PC-3 (cell line): ENCODE measurements at regions of chr6 and their contacts with region 1.

Region 1: DNA sequence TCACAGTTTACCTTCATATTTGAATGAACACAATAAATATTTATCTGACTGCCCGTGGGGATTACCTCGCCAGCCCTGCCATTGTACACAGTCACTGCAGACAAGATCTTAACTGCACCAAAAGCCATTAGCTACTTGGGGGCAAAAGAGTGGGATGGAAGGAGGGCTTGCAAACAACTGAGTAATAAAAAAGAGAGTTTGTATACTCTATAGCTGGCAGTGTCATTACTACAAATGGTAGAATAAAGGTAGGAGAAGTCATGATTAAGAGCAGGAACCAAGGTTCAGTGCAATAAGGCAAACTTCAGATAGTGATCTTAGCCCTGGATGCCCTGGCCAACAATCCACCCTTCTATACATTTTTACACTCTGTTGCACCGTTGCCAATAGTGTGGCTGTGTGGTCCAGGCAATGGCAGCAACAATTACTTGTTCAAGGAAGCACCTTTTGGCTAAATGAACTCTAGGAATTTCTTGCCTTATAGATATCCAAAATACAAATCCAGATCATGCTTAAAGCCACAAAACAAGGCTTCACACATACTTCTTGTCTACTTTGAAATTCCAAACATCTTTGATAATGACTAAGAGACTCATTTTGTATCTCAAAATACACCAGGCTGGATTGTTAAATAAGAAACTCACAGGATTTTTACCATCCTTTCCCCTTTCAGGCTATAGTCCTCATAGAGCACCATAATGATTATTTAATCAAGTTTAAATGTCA is 955.3 kb upstream of the ADGRB3 start:
- DNase-seq: peak; percentile 65
- ATAC-seq: peak; percentile 61
- H3K4me3 ChIP-seq: no peak overlapping the region
- H3K27ac ChIP-seq: peak overlapping the region; percentile 65
- H3K4me1 ChIP-seq: peaks cover 43% of the 10 kb centered on the region
- H3K27me3 ChIP-seq: no peaks in the 10 kb centered on the region
- CTCF ChIP-seq: no peak

Region 2: GRCh38 chr6:66048684-66049474 is 1630.9 kb before region 1 on chr6:
- CTCF ChIA-PET with region 1: no interaction called
- POLR2A ChIA-PET with region 1: no interaction called
- intact Hi-C with region 1: no loop called
- DNase-seq: no peak
- ATAC-seq: no peak
- H3K4me3 ChIP-seq: no peak overlapping the region
- H3K27ac ChIP-seq: no peak overlapping the region
- H3K4me1 ChIP-seq: no peaks in the 10 kb centered on the region
- H3K27me3 ChIP-seq: no peaks in the 10 kb centered on the region
- CTCF ChIP-seq: no peak

Region 3: GRCh38 chr6:67541586-67541985 is 138.1 kb before region 1 on chr6:
- CTCF ChIA-PET with region 1: no interaction called
- POLR2A ChIA-PET with region 1: no interaction called
- intact Hi-C with region 1: loop called (anchors 5 kb)
- DNase-seq: peak; percentile 34
- ATAC-seq: peak; percentile 85
- H3K4me3 ChIP-seq: no peak overlapping the region
- H3K27ac ChIP-seq: no peak overlapping the region
- H3K4me1 ChIP-seq: no peaks in the 10 kb centered on the region
- H3K27me3 ChIP-seq: no peaks in the 10 kb centered on the region
- CTCF ChIP-seq: no peak

Region 4: GRCh38 chr6:67630146-67630545 is 49.6 kb before region 1 on chr6:
- CTCF ChIA-PET with region 1: no interaction called
- POLR2A ChIA-PET with region 1: no interaction called
- intact Hi-C with region 1: loop called (anchors 2 kb)
- DNase-seq: peak; percentile 64
- ATAC-seq: peak; percentile 99
- H3K4me3 ChIP-seq: no peak overlapping the region
- H3K27ac ChIP-seq: 0 out of 2 replicates have a peak overlapping the region, but pooled peaks have one; percentile 7
- H3K4me1 ChIP-seq: peaks cover 13% of the 10 kb centered on the region
- H3K27me3 ChIP-seq: no peaks in the 10 kb centered on the region
- CTCF ChIP-seq: no peak

Region 5: DNA sequence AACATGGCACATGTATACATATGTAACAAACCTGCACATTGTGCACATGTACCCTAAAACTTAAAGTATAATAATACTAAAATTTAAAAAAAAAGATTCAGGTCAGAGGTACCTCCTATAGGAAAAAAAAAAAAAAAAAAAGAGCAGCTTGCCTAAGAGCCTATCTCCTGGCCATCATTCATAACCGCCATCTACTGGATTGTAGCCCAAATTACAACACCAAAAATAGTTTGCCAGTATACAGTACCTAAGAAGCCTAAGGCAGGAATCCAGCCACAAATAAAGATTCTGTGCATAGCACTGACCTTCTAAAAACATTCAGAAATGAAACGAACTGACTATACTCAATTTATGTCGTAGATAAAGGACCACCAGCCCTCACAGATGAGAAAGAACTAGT is 516.9 kb after region 1 on chr6:
- CTCF ChIA-PET with region 1: no interaction called
- POLR2A ChIA-PET with region 1: no interaction called
- intact Hi-C with region 1: loop called (anchors 10 kb)
- DNase-seq: peak; percentile 65
- ATAC-seq: peak; percentile 57
- H3K4me3 ChIP-seq: no peak overlapping the region
- H3K27ac ChIP-seq: no peak overlapping the region
- H3K4me1 ChIP-seq: no peaks in the 10 kb centered on the region
- H3K27me3 ChIP-seq: no peaks in the 10 kb centered on the region
- CTCF ChIP-seq: peak; percentile 41; the same call in 1 of the 2 replicates